ENCODE measurements at regions of chr22 and their contacts with region 1.

Region 1: GRCh38 chr22:39013942-39014722 is at the start of gene APOBEC3C:
- DNase-seq: peak; percentile 85
- ATAC-seq: peak; percentile 96
- H3K4me3 ChIP-seq: peak within 1 kb of the TSS; percentile 38 to 88 (median 71)
- H3K4me3 Mint-ChIP-seq: peak within 1 kb of the TSS; percentile 96
- H3K27ac ChIP-seq: peak within 1 kb of the TSS; percentile 84 to 89
- H3K27ac Mint-ChIP-seq: peak within 1 kb of the TSS; percentile 87
- H3K4me1 ChIP-seq: peaks cover 15 to 43% of the 10 kb centered on the region in 2 donors
- H3K4me1 Mint-ChIP-seq: peaks cover 47% of the 10 kb centered on the region
- H3K27me3 ChIP-seq: no peaks in the 10 kb centered on the region
- H3K27me3 Mint-ChIP-seq: no peaks in the 10 kb centered on the region
- CTCF ChIP-seq: peak; percentile 23
- total RNA-seq, gene APOBEC3C: 99.1 and 107 TPM in 2 replicates

Region 2: DNA sequence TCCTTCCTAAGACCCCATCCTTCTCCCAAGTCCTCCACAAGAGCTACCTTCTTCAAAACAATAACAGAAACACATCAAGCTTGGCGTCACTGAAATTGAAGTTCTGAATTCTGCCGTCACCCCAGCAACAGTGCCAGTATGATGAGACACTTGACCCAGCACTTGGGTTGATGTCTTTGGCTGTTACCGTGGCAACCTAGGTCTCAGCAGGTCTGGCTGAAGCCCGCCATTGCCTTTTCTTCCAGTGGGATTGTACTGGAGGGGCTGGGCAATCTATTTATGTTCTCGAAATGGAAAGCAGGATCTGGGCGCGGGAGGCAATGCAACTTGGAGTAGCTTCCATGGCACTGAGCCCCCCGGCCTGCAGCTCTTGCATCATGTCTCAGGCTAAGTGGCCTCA is 194.1 kb before region 1 on chr22:
- CTCF ChIA-PET with region 1: no interaction called
- POLR2A ChIA-PET with region 1: no interaction called
- intact Hi-C with region 1: no loop called
- DNase-seq: no peak
- ATAC-seq: no peak
- H3K4me3 ChIP-seq: no peak overlapping the region
- H3K4me3 Mint-ChIP-seq: no peak overlapping the region
- H3K27ac ChIP-seq: no peak overlapping the region
- H3K27ac Mint-ChIP-seq: no peak overlapping the region
- H3K4me1 ChIP-seq: no peaks in the 10 kb centered on the region
- H3K4me1 Mint-ChIP-seq: no peaks in the 10 kb centered on the region
- H3K27me3 ChIP-seq: no peaks in the 10 kb centered on the region
- H3K27me3 Mint-ChIP-seq: peaks cover 22% of the 10 kb centered on the region
- CTCF ChIP-seq: no peak

Region 3: GRCh38 chr22:38935023-38935422 is 79.1 kb before region 1 on chr22:
- CTCF ChIA-PET with region 1: no interaction called
- POLR2A ChIA-PET with region 1: no interaction called
- intact Hi-C with region 1: no loop called
- DNase-seq: no peak
- ATAC-seq: no peak
- H3K4me3 ChIP-seq: no peak overlapping the region
- H3K4me3 Mint-ChIP-seq: no peak overlapping the region
- H3K27ac ChIP-seq: no peak overlapping the region
- H3K27ac Mint-ChIP-seq: no peak overlapping the region
- H3K4me1 ChIP-seq: no peaks in the 10 kb centered on the region
- H3K4me1 Mint-ChIP-seq: no peaks in the 10 kb centered on the region
- H3K27me3 ChIP-seq: peaks cover 0 to 6% (median 3%) of the 10 kb centered on the region in 4 experiments
- H3K27me3 Mint-ChIP-seq: peaks cover 26% of the 10 kb centered on the region
- CTCF ChIP-seq: no peak

Region 4: DNA sequence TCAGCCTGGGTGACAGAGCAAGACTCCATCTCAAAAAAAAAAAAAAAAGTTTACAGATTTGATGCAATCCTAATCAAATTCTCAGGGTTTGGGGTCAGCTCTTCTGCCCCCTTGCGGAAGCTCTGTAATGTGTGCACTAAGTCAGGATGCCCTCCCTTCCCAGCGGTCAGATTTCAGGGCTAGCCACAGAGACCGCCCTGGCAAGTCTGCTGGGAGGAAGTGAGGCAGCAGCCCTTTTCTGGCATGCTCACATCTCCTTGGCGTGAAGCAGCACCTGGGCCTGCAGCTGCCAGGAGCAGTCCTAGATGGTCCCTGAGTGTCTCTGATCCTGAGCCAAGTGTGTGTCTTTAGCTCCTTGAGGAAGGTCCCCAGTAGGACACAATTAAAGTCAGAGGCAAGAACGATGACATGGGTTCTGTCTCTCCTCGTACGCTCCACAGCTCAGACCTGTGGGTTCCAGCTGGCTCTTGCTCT is 10.9 kb before region 1 on chr22:
- CTCF ChIA-PET with region 1: interaction called, 10 read pairs
- POLR2A ChIA-PET with region 1: no interaction called
- intact Hi-C with region 1: no loop called
- DNase-seq: peak; percentile 84
- ATAC-seq: peak; percentile 93
- H3K4me3 ChIP-seq: no peak overlapping the region
- H3K4me3 Mint-ChIP-seq: no peak overlapping the region
- H3K27ac ChIP-seq: no peak overlapping the region
- H3K27ac Mint-ChIP-seq: peak overlapping the region; percentile 27
- H3K4me1 ChIP-seq: peaks cover 7 to 12% of the 10 kb centered on the region in 2 donors
- H3K4me1 Mint-ChIP-seq: peaks cover 13% of the 10 kb centered on the region
- H3K27me3 ChIP-seq: no peaks in the 10 kb centered on the region
- H3K27me3 Mint-ChIP-seq: peaks cover 2% of the 10 kb centered on the region
- CTCF ChIP-seq: peak; percentile 80

Region 5: DNA sequence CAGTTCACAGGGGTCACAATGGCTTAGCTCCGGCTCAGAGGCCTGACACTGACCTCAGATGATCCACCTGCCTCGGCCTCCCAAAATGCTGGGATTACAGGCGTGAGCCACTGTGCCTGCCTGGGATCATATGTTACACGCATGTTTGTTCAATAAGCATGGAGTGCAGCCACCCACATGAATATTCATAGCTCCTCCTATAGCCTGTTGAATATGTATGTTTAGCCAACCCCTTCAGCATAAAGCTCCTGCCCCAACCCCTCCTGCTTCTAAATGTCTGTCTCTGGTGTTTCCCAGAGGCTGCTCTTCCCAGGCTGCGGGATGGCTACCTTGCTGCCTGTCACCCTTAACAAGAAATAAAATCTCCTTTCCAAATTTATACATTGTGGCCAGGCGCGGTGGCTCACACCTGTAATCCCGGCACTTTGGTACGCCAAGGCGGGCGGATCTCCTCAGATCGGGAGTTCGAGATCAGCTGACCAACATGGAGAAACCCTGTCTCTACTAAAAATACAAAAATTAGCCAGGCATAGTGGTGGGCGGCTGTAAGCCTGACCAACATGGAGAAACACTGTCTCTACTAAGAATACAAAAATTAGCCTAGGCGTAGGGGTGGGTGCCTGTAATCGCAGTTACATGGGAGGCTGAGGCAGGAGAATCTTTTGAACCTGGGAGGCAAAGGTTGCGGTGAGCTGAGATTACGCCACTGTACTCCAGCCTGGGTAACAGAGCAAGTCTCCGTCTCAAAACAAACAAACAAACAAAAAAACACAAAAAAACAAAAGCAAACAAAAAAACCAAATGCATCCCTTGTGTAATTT is 25.4 kb after region 1 on chr22:
- CTCF ChIA-PET with region 1: interaction called, 3 read pairs
- POLR2A ChIA-PET with region 1: no interaction called
- intact Hi-C with region 1: loop called (anchors 2 kb)
- DNase-seq: no peak
- ATAC-seq: no peak
- H3K4me3 ChIP-seq: peak overlapping the region in 1 of 5 experiments; percentile 59
- H3K4me3 Mint-ChIP-seq: peak overlapping the region; percentile 92
- H3K27ac ChIP-seq: peak overlapping the region; percentile 51 to 91
- H3K27ac Mint-ChIP-seq: peak overlapping the region; percentile 90
- H3K4me1 ChIP-seq: peaks cover 20 to 47% of the 10 kb centered on the region in 2 donors
- H3K4me1 Mint-ChIP-seq: peaks cover 40% of the 10 kb centered on the region
- H3K27me3 ChIP-seq: no peaks in the 10 kb centered on the region
- H3K27me3 Mint-ChIP-seq: no peaks in the 10 kb centered on the region
- CTCF ChIP-seq: no peak

Region 6: GRCh38 chr22:39068033-39068791 is 54.1 kb after region 1 on chr22:
- CTCF ChIA-PET with region 1: interaction called, 5 read pairs
- POLR2A ChIA-PET with region 1: no interaction called
- intact Hi-C with region 1: loop called (anchors 2 kb)
- DNase-seq: peak; percentile 42
- ATAC-seq: no peak
- H3K4me3 ChIP-seq: peak overlapping the region; percentile 50 to 99 (median 96)
- H3K4me3 Mint-ChIP-seq: no peak overlapping the region
- H3K27ac ChIP-seq: peak overlapping the region; percentile 97 to 98
- H3K27ac Mint-ChIP-seq: no peak overlapping the region
- H3K4me1 ChIP-seq: peaks cover 70 to 95% of the 10 kb centered on the region in 2 donors
- H3K4me1 Mint-ChIP-seq: peaks cover 45% of the 10 kb centered on the region
- H3K27me3 ChIP-seq: no peaks in the 10 kb centered on the region
- H3K27me3 Mint-ChIP-seq: no peaks in the 10 kb centered on the region
- CTCF ChIP-seq: peak; percentile 54

Region 7: DNA sequence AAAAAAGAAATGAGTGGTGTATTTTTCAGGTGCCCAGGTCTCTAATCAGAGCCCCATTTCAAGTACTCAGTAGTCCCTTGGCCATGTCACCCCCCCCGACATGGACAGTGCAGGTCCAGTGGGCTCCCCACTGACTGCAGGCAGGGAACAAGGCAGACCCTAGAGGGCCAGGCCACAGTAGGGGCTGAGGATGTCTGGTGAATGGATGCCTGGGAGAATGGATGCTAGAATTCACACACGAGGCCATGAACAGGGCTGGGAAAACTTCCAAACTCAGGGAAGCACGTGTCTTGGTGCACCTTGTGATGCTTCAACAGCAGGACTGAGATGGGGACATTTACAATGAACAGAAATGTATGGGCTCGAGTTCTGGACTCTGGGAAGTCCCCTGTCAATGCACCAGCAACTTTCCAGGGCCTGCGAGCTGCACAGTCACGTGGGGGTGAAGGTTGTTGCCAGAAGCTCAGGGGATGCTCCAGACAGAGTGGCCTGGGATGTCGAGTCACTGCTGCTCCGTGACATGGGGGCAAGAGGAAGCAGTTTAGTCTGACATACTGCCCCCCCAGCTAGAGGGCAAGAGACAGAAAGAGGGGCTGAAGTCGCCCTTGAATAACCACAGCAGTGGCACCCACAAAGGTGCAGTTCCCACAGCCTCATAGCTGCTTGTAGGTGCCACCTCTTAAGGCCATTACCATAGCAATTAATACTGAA is 66.1 kb after region 1 on chr22:
- CTCF ChIA-PET with region 1: no interaction called
- POLR2A ChIA-PET with region 1: interaction called, 18 read pairs
- intact Hi-C with region 1: no loop called
- DNase-seq: peak; percentile 72
- ATAC-seq: peak; percentile 14
- H3K4me3 ChIP-seq: no peak overlapping the region
- H3K4me3 Mint-ChIP-seq: peak overlapping the region; percentile 68
- H3K27ac ChIP-seq: peak overlapping the region; percentile 63 to 72
- H3K27ac Mint-ChIP-seq: peak overlapping the region; percentile 88
- H3K4me1 ChIP-seq: peaks cover 31 to 52% of the 10 kb centered on the region in 2 donors
- H3K4me1 Mint-ChIP-seq: peaks cover 48% of the 10 kb centered on the region
- H3K27me3 ChIP-seq: no peaks in the 10 kb centered on the region
- H3K27me3 Mint-ChIP-seq: no peaks in the 10 kb centered on the region
- CTCF ChIP-seq: no peak

Region 8: DNA sequence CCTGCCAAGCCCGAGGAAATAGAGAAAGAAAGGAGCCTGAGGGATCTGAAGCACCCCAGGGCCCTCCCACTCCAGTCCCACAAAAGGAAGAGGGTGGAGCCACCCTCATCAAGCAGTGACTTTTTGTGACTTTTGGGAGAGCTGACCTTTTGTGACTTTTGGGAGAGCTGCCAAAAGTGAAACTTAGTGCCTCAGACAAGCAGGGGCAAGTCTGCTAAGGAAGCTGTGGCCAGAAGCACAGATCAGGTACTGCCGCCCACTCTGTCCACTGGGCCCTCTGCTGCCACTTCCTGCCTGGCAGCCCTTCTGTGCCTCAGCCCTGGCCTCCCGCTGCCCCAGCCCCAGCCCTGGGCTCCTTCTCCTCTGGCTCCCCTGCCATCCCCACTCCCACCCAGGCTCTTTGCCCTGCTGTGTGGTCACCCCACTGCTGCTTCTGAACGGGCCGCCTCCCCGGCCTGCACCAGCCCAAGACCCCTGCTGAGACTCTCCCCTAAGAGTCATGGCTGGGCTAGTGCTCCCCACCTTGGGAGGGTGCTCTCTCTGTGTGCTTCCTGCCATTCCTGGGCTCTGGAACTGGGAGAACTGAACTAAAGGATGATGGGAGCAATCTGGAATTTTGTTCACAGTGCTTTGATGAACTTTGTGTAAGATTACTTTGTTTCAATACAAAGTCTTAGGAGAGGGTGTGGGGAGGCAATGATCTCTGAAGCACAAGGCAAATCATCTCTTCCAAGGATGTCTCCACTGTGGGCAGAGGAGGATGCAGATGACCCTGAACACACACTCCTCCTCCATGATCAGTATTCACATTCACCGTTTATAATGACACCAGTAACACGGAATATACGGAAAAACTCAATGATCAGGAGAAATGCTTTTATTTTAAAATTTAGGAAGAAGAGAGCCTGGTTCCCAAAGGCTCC is 83.2 kb after region 1 on chr22 and contains the start of gene APOBEC3H:
- CTCF ChIA-PET with region 1: interaction called, 3 read pairs
- POLR2A ChIA-PET with region 1: no interaction called
- intact Hi-C with region 1: loop called (anchors 1 kb)
- DNase-seq: no peak
- ATAC-seq: no peak
- H3K4me3 ChIP-seq: peak within 1 kb of the TSS in 1 of 5 experiments; percentile 10
- H3K4me3 Mint-ChIP-seq: peak within 1 kb of the TSS; percentile 72
- H3K27ac ChIP-seq: peak within 1 kb of the TSS; percentile 95 to 98
- H3K27ac Mint-ChIP-seq: peak within 1 kb of the TSS; percentile 98
- H3K4me1 ChIP-seq: peaks cover 59 to 60% of the 10 kb centered on the region in 2 donors
- H3K4me1 Mint-ChIP-seq: peaks cover 63% of the 10 kb centered on the region
- H3K27me3 ChIP-seq: no peaks in the 10 kb centered on the region
- H3K27me3 Mint-ChIP-seq: no peaks in the 10 kb centered on the region
- CTCF ChIP-seq: no peak
- total RNA-seq, gene APOBEC3H: 0.59 and 1.0 TPM in 2 replicates

Region 9: DNA sequence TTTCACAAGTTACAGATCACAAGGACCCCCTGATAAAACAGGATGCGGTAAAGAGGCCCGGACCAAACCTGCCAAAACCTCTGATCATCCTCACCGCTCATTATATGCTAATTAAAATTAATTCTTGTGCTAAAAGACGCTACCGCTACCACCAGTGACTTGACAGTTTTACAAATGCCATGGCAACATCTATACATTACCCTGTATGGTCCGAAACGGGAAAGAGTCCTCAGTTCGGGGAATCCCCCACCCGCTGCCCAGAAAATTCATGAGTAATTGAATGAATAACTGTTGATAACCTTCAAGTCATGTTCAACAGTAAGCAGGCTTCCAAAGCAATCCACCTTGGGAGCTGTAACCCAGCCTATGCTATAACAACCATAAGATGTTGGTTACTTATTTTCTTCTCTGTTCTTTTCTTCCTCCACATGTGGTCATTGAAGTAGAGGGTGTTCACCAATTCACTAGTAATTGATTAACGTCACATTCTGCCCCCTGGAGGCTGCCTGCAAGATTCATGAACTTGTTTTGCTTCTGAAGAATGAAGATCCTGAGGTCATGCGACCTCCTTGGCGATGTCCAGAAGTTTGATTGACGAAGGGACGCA is 103.6 kb after region 1 on chr22:
- CTCF ChIA-PET with region 1: interaction called, 150 read pairs
- POLR2A ChIA-PET with region 1: interaction called, 3 read pairs
- intact Hi-C with region 1: loop called (anchors 2 kb)
- DNase-seq: peak; percentile 83
- ATAC-seq: peak; percentile 56
- H3K4me3 ChIP-seq: no peak overlapping the region
- H3K4me3 Mint-ChIP-seq: peak overlapping the region; percentile 61
- H3K27ac ChIP-seq: peak overlapping the region; percentile 1 to 11
- H3K27ac Mint-ChIP-seq: peak overlapping the region; percentile 68
- H3K4me1 ChIP-seq: peaks cover 40 to 43% of the 10 kb centered on the region in 2 donors
- H3K4me1 Mint-ChIP-seq: peaks cover 46% of the 10 kb centered on the region
- H3K27me3 ChIP-seq: no peaks in the 10 kb centered on the region
- H3K27me3 Mint-ChIP-seq: no peaks in the 10 kb centered on the region
- CTCF ChIP-seq: peak; percentile 78

Measured in B cell (primary cell).